ENCODE measurements at regions of chr20 and their contacts with region 1.

Region 1: DNA sequence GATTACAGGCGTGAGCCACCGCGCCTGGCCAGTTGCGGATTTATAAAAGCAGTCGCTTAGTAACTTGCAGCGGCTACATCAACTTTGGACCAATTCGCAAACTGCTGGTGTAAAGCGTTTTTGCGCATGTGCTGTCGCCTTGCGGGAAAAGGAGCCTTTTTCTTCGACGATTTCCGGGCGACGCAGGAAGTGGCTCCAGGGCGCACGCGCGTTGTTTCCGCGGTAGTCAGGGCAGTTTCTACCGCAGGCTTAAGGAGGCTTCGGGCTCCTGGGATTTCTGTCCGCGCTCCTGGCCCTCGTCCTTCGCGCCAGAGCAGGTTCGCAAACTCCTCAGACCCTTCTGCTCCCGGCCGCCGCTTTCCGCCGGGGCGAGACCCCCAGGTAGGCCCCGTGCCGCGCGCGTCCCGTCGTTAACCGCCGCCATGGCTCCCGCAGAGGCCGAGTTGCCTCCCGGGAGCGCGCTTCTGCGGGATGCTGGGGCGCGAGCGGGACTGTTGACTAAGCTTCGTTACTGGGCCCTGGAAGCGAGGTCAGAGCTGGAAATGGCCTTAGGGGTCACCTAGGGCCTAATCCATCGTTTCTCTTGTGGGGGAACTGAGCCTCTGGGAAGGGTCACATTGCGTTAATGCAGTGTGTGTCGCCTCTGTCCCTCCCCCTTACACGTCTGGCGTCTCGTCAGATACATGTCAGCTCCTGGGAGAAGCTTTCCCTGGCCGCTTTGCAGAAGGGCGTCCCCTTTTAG is at the start of gene RAE1:
- DNase-seq: peak; percentile 80 to 97 (median 92)
- ATAC-seq: peak; percentile 86
- H3K4me3 ChIP-seq: peak within 1 kb of the TSS; percentile 78 to 97
- H3K4me3 Mint-ChIP-seq: peak within 1 kb of the TSS; percentile 90
- H3K27ac ChIP-seq: peak within 1 kb of the TSS; percentile 78 to 84
- H3K27ac Mint-ChIP-seq: peak within 1 kb of the TSS; percentile 92
- H3K4me1 ChIP-seq: peaks cover 23% of the 10 kb centered on the region
- H3K4me1 Mint-ChIP-seq: peaks cover 27% of the 10 kb centered on the region
- H3K27me3 ChIP-seq: no peaks in the 10 kb centered on the region
- H3K27me3 Mint-ChIP-seq: no peaks in the 10 kb centered on the region
- CTCF ChIP-seq: no peak
- total RNA-seq, gene RAE1: 58.9 to 59.4 TPM

Region 2: GRCh38 chr20:56468316-56469082 is 882.7 kb before region 1 on chr20 and contains the start of gene RTF2:
- CTCF ChIA-PET with region 1: no interaction called
- POLR2A ChIA-PET with region 1: no interaction called
- intact Hi-C with region 1: loop called (anchors 2 to 5 kb)
- DNase-seq: peak; percentile 93 to 99 (median 97)
- ATAC-seq: peak; percentile 98
- H3K4me3 ChIP-seq: peak within 1 kb of the TSS; percentile 74 to 94
- H3K4me3 Mint-ChIP-seq: peak within 1 kb of the TSS; percentile 97
- H3K27ac ChIP-seq: peak within 1 kb of the TSS; percentile 93 to 95
- H3K27ac Mint-ChIP-seq: peak within 1 kb of the TSS; percentile 100
- H3K4me1 ChIP-seq: peaks cover 29% of the 10 kb centered on the region
- H3K4me1 Mint-ChIP-seq: peaks cover 47% of the 10 kb centered on the region
- H3K27me3 ChIP-seq: no peaks in the 10 kb centered on the region
- H3K27me3 Mint-ChIP-seq: no peaks in the 10 kb centered on the region
- CTCF ChIP-seq: no peak
- total RNA-seq, gene RTF2: 56.5 to 57.6 TPM

Region 3: DNA sequence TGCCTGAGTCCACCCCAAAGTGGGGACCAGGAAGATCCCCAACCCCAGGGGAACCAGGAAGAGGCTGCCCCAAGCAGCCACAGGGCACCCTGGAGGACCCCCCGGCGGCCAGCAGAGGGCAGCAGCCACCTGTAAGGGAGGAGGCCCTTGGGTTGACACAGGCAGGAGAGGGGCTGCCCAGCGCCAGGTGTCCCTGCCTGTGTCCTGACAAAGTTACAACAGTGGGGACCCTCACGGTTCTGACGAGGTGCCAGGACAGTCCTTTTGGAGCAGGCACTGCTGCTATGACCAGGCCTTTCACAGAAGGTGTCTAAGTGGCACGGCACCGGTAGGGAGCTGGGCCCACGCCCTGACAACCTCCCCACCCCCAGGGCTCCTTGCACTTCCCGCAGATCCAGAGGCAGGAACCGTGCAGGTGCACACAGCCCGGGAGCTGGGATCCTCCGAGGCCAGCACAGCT is 261.5 kb before region 1 on chr20:
- CTCF ChIA-PET with region 1: interaction called, 5 read pairs
- POLR2A ChIA-PET with region 1: no interaction called
- intact Hi-C with region 1: loop called in 1 of 2 experiments (anchors 1 kb)
- DNase-seq: peak; percentile 19 to 61 (median 50)
- ATAC-seq: peak; percentile 56
- H3K4me3 ChIP-seq: no peak overlapping the region
- H3K4me3 Mint-ChIP-seq: no peak overlapping the region
- H3K27ac ChIP-seq: no peak overlapping the region
- H3K27ac Mint-ChIP-seq: no peak overlapping the region
- H3K4me1 ChIP-seq: peaks cover 6% of the 10 kb centered on the region
- H3K4me1 Mint-ChIP-seq: peaks cover 16% of the 10 kb centered on the region
- H3K27me3 ChIP-seq: no peaks in the 10 kb centered on the region
- H3K27me3 Mint-ChIP-seq: peaks cover 18% of the 10 kb centered on the region
- CTCF ChIP-seq: peak; percentile 61

Region 4: GRCh38 chr20:57498425-57499400 is 147.5 kb after region 1 on chr20:
- CTCF ChIA-PET with region 1: interaction called, 5 read pairs
- POLR2A ChIA-PET with region 1: no interaction called
- intact Hi-C with region 1: loop called in 1 of 2 experiments (anchors 1 kb)
- DNase-seq: peak in 5 of 9 experiments; percentile 34 to 61 (median 42)
- ATAC-seq: peak; percentile 74
- H3K4me3 ChIP-seq: no peak overlapping the region
- H3K4me3 Mint-ChIP-seq: no peak overlapping the region
- H3K27ac ChIP-seq: no peak overlapping the region
- H3K27ac Mint-ChIP-seq: no peak overlapping the region
- H3K4me1 ChIP-seq: peaks cover 6% of the 10 kb centered on the region
- H3K4me1 Mint-ChIP-seq: peaks cover 13% of the 10 kb centered on the region
- H3K27me3 ChIP-seq: peaks cover 0 to 4% of the 10 kb centered on the region in 2 experiments
- H3K27me3 Mint-ChIP-seq: peaks cover 32% of the 10 kb centered on the region
- CTCF ChIP-seq: peak; percentile 48

Region 5: GRCh38 chr20:57611586-57612311 is 260.5 kb after region 1 on chr20:
- CTCF ChIA-PET with region 1: no interaction called
- POLR2A ChIA-PET with region 1: no interaction called
- intact Hi-C with region 1: no loop called
- DNase-seq: no peak
- ATAC-seq: no peak
- H3K4me3 ChIP-seq: no peak overlapping the region
- H3K4me3 Mint-ChIP-seq: no peak overlapping the region
- H3K27ac ChIP-seq: no peak overlapping the region
- H3K27ac Mint-ChIP-seq: no peak overlapping the region
- H3K4me1 ChIP-seq: peaks cover 10% of the 10 kb centered on the region
- H3K4me1 Mint-ChIP-seq: peaks cover 3% of the 10 kb centered on the region
- H3K27me3 ChIP-seq: no peaks in the 10 kb centered on the region
- H3K27me3 Mint-ChIP-seq: no peaks in the 10 kb centered on the region
- CTCF ChIP-seq: no peak

Region 6: DNA sequence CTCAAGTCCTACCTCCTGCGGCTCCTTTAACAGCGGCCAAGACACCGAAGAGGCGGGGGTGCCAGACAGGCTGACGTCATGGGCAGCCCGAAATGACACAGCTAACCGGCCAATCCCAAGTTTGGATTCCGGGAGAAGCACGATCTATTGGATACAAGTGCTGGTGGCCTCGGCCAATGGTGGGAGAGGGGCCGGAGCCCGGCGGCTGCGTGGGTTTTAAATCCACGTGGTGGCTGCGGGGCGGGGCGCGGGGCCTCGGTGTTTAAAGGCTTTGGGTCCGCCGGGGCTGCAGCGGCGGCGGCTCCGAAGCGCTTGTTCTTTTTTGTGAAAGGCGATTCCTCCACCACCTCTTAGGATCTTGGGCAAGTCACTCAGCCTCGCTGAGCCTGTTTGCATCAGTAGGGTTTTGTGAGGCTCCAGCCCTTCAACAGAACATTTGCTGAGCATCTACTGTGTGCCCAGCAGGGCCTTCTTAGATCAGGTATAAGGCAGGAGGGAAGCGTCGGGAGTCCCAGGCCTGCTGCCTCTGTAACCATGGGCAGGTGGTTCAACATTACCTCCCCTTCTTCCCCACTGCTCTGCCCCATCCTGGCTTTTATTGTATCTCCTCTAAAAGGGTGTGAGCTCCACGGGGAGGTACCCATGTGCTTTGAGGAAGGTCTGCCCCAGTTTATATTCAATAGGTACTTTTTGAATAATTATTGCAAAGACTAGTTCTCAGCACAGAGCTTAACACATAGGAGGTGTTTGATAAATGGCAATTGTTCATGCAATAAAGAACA is 367.5 kb after region 1 on chr20:
- CTCF ChIA-PET with region 1: no interaction called
- POLR2A ChIA-PET with region 1: no interaction called
- intact Hi-C with region 1: loop called in 1 of 2 experiments (anchors 5 kb)
- DNase-seq: peak; percentile 78 to 96 (median 90)
- ATAC-seq: peak; percentile 97
- H3K4me3 ChIP-seq: peak overlapping the region; percentile 37 to 55
- H3K4me3 Mint-ChIP-seq: peak overlapping the region; percentile 69
- H3K27ac ChIP-seq: no peak overlapping the region
- H3K27ac Mint-ChIP-seq: peak overlapping the region; percentile 41
- H3K4me1 ChIP-seq: peaks cover 11% of the 10 kb centered on the region
- H3K4me1 Mint-ChIP-seq: peaks cover 11% of the 10 kb centered on the region
- H3K27me3 ChIP-seq: peaks cover 0 to 2% of the 10 kb centered on the region in 2 experiments
- H3K27me3 Mint-ChIP-seq: peaks cover 4% of the 10 kb centered on the region
- CTCF ChIP-seq: no peak

Region 7: DNA sequence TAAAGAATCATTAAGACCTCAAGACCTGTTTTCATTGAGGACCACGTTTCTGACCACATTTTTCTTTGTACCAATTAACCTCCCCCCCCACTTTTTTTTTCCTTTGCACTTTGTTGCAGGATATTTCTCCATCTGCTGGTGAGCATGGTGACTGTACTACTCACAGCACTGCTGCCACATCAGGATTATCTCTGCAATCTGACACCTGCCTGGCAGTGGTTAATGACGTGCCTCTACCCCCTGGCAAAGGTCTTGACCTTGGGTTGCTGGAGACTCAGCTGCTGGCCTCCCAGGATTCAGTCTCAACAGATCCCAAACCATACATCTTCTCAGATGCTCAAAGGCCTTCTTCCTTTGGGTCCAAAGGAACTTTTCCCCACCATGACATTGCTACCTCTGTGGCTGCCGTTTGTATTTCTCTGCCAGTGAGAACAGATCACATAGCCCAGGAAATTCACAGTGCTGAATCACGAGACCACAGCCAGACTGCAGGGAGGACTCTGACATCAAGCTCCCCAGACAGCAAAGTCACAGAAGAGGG is 1902.6 kb after region 1 on chr20:
- CTCF ChIA-PET with region 1: no interaction called
- POLR2A ChIA-PET with region 1: no interaction called
- intact Hi-C with region 1: loop called in 1 of 2 experiments (anchors 10 kb)
- DNase-seq: peak in 7 of 9 experiments; percentile 26 to 70 (median 40)
- ATAC-seq: peak; percentile 61
- H3K4me3 ChIP-seq: peak overlapping the region in 1 of 2 experiments; percentile 18
- H3K4me3 Mint-ChIP-seq: peak overlapping the region; percentile 75
- H3K27ac ChIP-seq: peak overlapping the region; percentile 57 to 59
- H3K27ac Mint-ChIP-seq: peak overlapping the region; percentile 98
- H3K4me1 ChIP-seq: peaks cover 53% of the 10 kb centered on the region
- H3K4me1 Mint-ChIP-seq: peaks cover 74% of the 10 kb centered on the region
- H3K27me3 ChIP-seq: no peaks in the 10 kb centered on the region
- H3K27me3 Mint-ChIP-seq: no peaks in the 10 kb centered on the region
- CTCF ChIP-seq: no peak

Measured in CD8-positive, alpha-beta T cell (primary cell).